ENCODE measurements at regions of chr1 and their contacts with region 1.

Region 1: GRCh38 chr1:174217787-174218574 is 58.7 kb downstream of the RABGAP1L start:
- DNase-seq: peak; percentile 63
- H3K4me3 ChIP-seq: no peak overlapping the region
- H3K27ac ChIP-seq: peak overlapping the region; percentile 51
- H3K4me1 ChIP-seq: peaks cover 28% of the 10 kb centered on the region
- CTCF ChIP-seq: peak; percentile 98

Region 2: DNA sequence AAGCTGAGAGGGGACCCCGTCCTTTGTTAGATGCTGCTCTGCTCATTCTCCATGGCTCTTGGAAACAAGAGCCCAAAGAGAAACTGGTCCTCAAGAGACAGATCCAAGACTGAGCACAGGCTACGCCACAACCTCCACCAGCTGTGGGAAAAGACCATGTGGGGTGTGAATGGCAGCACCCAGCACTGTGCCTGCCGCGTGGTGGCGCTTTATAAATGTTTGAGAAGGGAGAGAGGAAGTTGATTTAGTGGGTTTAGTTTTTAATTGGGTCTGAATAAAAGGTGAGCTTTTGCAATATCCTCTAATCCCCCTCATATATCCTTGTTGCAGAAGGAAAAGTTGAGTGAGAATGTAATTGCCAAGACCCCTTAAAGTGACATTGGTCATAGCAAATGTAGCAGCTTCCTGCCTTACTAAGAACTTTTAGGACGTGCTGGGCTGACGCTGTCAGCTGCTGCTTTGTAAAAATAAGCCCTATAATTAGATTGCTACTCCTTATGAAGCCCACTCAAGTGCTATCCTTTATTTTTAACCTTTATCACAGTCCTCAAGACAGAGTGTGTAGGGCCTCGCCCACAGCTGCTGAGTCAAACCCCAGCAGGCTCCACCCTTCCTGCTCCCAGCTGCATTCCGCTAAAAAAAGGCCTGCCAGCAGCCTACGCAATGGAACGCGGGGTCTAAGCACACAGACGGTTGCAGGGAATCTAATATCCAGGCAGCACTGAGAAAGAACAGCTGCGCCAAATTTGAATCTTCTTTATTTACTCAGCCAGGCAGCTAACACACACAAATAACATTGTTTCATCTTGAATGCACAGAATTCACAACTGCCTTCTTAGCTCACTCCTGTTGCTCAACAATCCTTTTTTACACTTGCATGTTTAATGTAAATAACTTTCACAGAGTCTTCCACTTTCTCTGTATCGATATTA is 788.2 kb before region 1 on chr1:
- CTCF ChIA-PET with region 1: no interaction called
- POLR2A ChIA-PET with region 1: no interaction called
- intact Hi-C with region 1: loop called (anchors 5 kb)
- DNase-seq: peak; percentile 75
- H3K4me3 ChIP-seq: peak overlapping the region; percentile 30
- H3K27ac ChIP-seq: peak overlapping the region; percentile 66
- H3K4me1 ChIP-seq: peaks cover 29% of the 10 kb centered on the region
- CTCF ChIP-seq: peak; percentile 96

Region 3: GRCh38 chr1:173867753-173868265 is 350.2 kb before region 1 on chr1 and contains the start of gene GAS5:
- CTCF ChIA-PET with region 1: no interaction called
- POLR2A ChIA-PET with region 1: interaction called, 4 read pairs
- intact Hi-C with region 1: loop called (anchors 5 kb)
- DNase-seq: peak; percentile 99
- H3K4me3 ChIP-seq: peak within 1 kb of the TSS; percentile 98
- H3K27ac ChIP-seq: peak within 1 kb of the TSS; percentile 91
- H3K4me1 ChIP-seq: peaks cover 61% of the 10 kb centered on the region
- CTCF ChIP-seq: no peak
- total RNA-seq, gene GAS5: 899 and 1,026 TPM in 2 replicates

Region 4: DNA sequence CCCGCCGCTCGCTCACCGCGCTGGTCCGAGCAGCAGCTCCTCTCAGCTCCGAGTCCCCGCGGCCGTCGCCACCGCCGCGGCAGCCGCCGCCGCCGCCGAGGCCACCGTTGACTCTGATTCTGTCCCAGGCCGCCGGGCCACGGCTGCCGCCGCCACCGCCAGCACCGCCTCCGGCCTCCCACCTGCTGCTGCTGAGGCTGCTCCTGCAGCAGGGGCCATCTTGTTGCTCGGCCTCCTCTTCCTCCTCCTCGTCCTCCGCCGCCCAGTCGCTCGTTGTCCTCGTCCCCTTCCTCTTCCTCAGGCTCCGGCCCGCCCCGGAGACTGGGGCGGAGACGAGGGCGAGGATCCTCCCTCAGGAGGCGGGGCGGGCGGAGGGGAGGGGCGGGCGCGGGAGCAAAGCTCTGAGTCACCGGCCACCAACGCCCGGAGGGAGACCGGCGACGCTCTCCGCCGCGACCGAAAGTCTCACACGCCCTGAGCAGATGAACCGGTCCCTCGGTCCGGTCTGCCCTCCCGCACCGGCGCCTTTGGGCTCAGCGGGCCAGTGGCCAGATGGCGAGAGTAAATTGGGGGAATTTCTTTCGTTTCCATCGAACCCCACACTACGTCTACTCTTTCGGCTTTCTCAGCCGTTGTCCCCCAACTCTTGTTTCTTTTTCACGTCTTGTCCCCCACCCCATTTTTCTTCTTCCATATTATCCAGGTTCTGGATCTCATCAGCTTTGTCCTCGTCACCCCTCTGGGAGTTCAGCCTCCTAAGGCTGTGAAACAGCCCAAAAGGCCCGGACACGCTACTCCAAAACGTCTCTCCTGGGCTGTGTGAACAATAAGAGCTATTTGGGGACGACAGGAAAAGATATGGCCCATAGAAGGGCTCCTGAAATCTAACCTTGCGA is 195.7 kb before region 1 on chr1 and contains the start of gene RC3H1:
- CTCF ChIA-PET with region 1: no interaction called
- POLR2A ChIA-PET with region 1: interaction called, 3 read pairs
- intact Hi-C with region 1: loop called (anchors 5 kb)
- DNase-seq: peak; percentile 91
- H3K4me3 ChIP-seq: peak within 1 kb of the TSS; percentile 89
- H3K27ac ChIP-seq: peak within 1 kb of the TSS; percentile 51
- H3K4me1 ChIP-seq: peaks cover 37% of the 10 kb centered on the region
- CTCF ChIP-seq: no peak
- total RNA-seq, gene RC3H1: 21.0 and 32.0 TPM in 2 replicates

Region 5: GRCh38 chr1:174159252-174160108 is 58.5 kb before region 1 on chr1 and contains the start of gene RABGAP1L:
- CTCF ChIA-PET with region 1: interaction called, 3 read pairs
- POLR2A ChIA-PET with region 1: interaction called, 5 read pairs
- intact Hi-C with region 1: loop called (anchors 2 kb)
- DNase-seq: peak; percentile 96
- H3K4me3 ChIP-seq: peak within 1 kb of the TSS; percentile 96
- H3K27ac ChIP-seq: peak within 1 kb of the TSS; percentile 82
- H3K4me1 ChIP-seq: peaks cover 46% of the 10 kb centered on the region
- CTCF ChIP-seq: 0 out of 2 replicates have a peak, but pooled peaks have one; percentile 9
- total RNA-seq, gene RABGAP1L: 98.1 and 142 TPM in 2 replicates

Region 6: GRCh38 chr1:174358786-174359453 is 140.9 kb after region 1 on chr1:
- CTCF ChIA-PET with region 1: no interaction called
- POLR2A ChIA-PET with region 1: no interaction called
- intact Hi-C with region 1: no loop called
- DNase-seq: no peak
- H3K4me3 ChIP-seq: no peak overlapping the region
- H3K27ac ChIP-seq: no peak overlapping the region
- H3K4me1 ChIP-seq: peaks cover 5% of the 10 kb centered on the region
- CTCF ChIP-seq: peak; percentile 53

Region 7: GRCh38 chr1:174696026-174696821 is 478.2 kb after region 1 on chr1:
- CTCF ChIA-PET with region 1: no interaction called
- POLR2A ChIA-PET with region 1: no interaction called
- intact Hi-C with region 1: no loop called
- DNase-seq: no peak
- H3K4me3 ChIP-seq: no peak overlapping the region
- H3K27ac ChIP-seq: no peak overlapping the region
- H3K4me1 ChIP-seq: no peaks in the 10 kb centered on the region
- CTCF ChIP-seq: no peak